ENCODE measurements at regions of chr3 and their contacts with region 1.

Region 1: GRCh38 chr3:27610800-27611525 is 111.2 kb downstream of the EOMES start:
- DNase-seq: no peak
- ATAC-seq: peak; percentile 70
- H3K4me3 Mint-ChIP-seq: peak overlapping the region; percentile 55
- H3K27ac Mint-ChIP-seq: peak overlapping the region; percentile 7
- H3K4me1 Mint-ChIP-seq: peaks cover 34% of the 10 kb centered on the region
- H3K27me3 Mint-ChIP-seq: no peaks in the 10 kb centered on the region
- CTCF ChIP-seq: no peak

Region 2: DNA sequence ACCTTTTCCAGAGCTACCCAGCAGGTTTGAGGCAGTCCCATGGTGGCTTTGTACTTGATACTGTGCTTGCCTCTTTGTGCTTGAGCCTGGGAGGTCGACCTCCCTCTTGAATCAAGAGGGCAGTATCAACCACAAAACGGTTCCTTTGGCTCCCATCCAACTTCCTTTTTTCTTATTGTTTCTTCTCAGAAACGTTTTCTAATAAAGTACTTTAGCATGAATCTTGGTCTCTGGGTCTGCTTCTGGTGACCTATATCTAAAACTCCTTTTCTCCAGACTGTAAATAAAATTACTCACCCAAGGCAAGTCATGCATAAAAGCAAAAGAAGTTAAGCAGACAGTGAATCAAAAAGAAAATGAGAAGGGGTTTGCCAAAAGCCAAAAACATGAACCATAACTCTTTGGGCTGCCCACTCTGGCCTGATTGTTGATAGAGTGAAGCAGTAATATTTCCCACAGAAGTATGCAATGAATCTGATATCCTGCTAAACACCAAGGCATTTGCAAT is 14.6 kb before region 1 on chr3:
- CTCF ChIA-PET with region 1: no interaction called
- POLR2A ChIA-PET with region 1: no interaction called
- intact Hi-C with region 1: no loop called
- DNase-seq: no peak
- ATAC-seq: peak; percentile 49
- H3K4me3 Mint-ChIP-seq: no peak overlapping the region
- H3K27ac Mint-ChIP-seq: peak overlapping the region; percentile 43
- H3K4me1 Mint-ChIP-seq: peaks cover 21% of the 10 kb centered on the region
- H3K27me3 Mint-ChIP-seq: no peaks in the 10 kb centered on the region
- CTCF ChIP-seq: no peak

Region 3: DNA sequence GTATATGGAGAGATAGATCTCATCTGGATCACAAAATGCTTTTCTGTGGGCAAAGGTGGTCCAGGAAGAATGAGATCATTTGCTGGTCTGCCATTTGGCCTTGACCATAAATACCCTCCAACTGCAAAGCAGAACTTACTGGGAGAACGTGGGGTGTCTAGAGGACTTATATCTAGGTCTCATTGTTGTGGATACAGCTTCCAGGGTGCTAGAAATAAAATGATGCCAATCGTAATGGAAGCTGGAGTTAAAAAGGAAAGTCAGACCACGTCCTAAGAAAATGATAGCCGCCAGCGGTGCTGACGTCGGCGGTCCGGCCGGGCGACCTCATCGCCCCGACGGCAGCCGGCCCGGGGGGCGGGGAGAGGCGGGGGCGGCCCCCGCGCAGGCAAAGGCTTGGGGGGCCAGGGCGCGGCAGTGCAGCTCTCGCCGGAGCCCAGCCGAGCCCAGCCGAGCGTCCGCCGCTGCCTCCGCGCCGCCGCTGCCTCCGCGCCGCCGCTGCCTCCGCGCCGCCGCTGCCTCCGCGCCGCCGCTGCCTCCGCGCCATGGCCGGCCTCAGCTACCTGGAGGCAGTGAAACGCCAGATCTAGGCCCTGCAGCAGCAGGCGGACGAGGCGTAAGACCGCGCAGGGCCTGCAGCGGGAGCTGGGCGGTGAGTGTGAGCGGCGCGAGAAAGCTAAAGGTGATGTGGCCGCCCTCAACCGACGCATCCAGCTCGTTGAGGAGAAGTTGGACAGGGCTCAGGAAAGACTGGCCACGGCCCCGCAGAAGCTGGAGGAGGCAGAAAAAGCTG is 21.7 kb after region 1 on chr3:
- CTCF ChIA-PET with region 1: no interaction called
- POLR2A ChIA-PET with region 1: interaction called, 4 read pairs
- intact Hi-C with region 1: loop called (anchors 2 kb)
- DNase-seq: peak; percentile 46
- ATAC-seq: peak; percentile 82
- H3K4me3 Mint-ChIP-seq: peak overlapping the region; percentile 90
- H3K27ac Mint-ChIP-seq: peak overlapping the region; percentile 78
- H3K4me1 Mint-ChIP-seq: peaks cover 17% of the 10 kb centered on the region
- H3K27me3 Mint-ChIP-seq: no peaks in the 10 kb centered on the region
- CTCF ChIP-seq: no peak

Region 4: GRCh38 chr3:27643355-27643754 is 32.4 kb after region 1 on chr3:
- CTCF ChIA-PET with region 1: no interaction called
- POLR2A ChIA-PET with region 1: no interaction called
- intact Hi-C with region 1: no loop called
- DNase-seq: no peak
- ATAC-seq: no peak
- H3K4me3 Mint-ChIP-seq: no peak overlapping the region
- H3K27ac Mint-ChIP-seq: no peak overlapping the region
- H3K4me1 Mint-ChIP-seq: peaks cover 6% of the 10 kb centered on the region
- H3K27me3 Mint-ChIP-seq: no peaks in the 10 kb centered on the region
- CTCF ChIP-seq: no peak